ENCODE measurements at regions of chr16 and their contacts with region 1.

Region 1: DNA sequence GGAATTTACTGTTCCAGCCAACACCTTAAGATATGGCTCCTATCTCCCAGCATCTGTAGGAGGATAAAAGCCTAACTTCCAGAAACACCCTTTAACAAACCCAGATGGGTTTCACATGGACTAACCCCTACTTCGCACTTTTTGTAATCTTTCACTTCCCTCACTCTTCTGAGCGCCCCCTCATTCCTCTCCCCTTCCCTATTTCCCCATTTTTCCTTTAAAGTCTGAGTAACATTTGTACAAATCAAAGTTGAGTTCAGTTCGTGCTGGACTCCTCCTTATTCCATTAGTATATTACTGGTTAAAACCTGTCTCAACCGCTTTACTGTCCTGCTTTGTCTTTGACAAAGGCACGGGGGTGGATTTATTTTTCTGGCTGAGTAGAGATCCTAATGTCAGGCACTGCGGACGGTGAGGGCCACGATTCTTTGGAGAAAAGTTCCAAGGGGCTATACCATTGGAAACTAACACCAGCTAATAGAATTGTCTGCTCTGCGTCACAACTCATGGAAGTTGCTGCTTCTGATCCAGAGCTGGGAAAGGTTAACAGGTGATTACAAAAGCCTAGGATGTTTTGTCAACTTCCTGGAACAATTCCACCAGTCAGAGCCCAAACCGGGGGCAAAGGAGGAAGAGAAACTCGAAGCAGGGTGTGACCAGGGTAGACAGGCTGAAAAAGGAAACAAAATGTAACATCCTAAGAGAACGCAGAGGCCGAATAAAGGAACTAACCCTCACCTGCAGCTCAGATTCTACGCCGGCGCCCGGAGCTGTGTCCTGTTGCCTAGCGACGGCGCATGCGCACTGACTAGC is 12.5 kb downstream of the TAT start:
- DNase-seq: no peak

Region 2: DNA sequence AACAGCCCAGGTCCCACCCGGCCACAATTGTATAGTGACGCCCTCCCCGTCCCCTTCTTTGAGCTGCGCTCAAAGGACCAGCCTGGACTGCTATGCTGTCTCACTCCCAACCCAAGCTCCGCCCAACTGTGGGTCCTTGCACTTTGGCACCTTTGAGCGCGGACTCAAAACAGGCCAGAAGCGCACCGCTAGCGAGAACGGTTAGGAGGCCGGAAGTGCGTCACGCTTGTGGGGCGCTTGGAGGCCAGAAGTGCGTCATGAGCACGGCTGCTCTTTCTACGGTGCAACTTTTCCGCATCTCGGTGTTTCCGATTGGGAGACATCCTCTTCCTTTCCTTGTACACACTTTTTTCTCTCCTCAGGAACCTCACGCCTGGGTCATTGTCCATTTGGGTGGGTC is 75.2 kb before region 1 on chr16 and contains the start of gene ZNF19:
- CTCF ChIA-PET with region 1: no interaction called
- POLR2A ChIA-PET with region 1: no interaction called
- DNase-seq: no peak

Region 3: GRCh38 chr16:71501547-71501946 is 62.8 kb before region 1 on chr16:
- CTCF ChIA-PET with region 1: no interaction called
- POLR2A ChIA-PET with region 1: no interaction called
- DNase-seq: no peak

Region 4: GRCh38 chr16:71526111-71526631 is 38.2 kb before region 1 on chr16 and contains the start of gene CHST4:
- CTCF ChIA-PET with region 1: no interaction called
- POLR2A ChIA-PET with region 1: interaction called, 14 read pairs
- DNase-seq: peak; percentile 48